ENCODE measurements at regions of chr13 and their contacts with region 1.

Region 1: GRCh38 chr13:97432917-97433726 is 847 bp upstream of the RAP2A start:
- DNase-seq: peak; percentile 99
- H3K4me3 Mint-ChIP-seq: peak overlapping the region; percentile 95
- H3K27ac Mint-ChIP-seq: peak overlapping the region; percentile 99
- H3K4me1 Mint-ChIP-seq: peaks cover 22% of the 10 kb centered on the region
- H3K27me3 Mint-ChIP-seq: peaks cover 3% of the 10 kb centered on the region

Region 2: DNA sequence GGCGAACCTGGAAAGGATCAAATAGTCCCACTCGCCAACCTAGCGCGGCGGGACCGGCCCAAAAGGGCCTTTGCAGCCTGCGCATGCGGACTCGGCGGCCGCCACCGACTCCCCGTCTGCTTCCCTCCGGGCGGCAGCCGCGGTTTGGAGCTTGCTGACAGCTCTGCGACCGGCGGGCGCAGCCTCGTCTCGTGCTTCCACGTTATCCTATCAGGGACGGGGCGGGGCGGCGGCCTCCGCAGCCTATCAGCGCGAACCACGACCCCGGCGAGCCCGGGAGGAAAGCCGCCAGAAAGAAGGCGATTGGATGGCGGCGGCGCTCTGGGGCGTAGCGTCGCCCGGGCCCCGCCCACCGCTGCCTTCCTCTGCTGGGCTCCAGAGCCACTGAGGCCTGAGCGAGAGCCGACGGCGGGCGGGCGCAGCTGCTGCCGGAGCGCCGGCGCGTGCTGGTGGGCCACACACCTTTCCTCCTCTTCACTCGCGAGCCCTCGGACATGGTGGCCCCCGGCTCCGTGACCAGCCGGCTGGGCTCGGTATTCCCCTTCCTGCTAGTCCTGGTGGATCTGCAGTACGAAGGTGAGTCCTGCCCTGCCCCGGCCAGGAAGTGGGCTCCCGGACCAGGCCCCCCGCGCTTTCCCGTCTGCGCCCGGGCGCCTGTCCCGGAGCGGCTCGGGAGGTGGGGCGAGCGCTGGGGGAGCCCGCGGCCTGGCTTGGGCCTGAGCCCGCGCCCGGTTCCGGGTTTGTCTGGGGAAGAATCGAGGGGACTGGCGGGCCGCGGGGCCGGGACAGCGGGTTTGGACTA is 1756.2 kb before region 1 on chr13 and contains the start of gene DNAJC3:
- CTCF ChIA-PET with region 1: no interaction called
- POLR2A ChIA-PET with region 1: interaction called, 3 read pairs
- intact Hi-C with region 1: loop called (anchors 2 kb)
- DNase-seq: peak; percentile 98
- H3K4me3 Mint-ChIP-seq: peak within 1 kb of the TSS; percentile 94
- H3K27ac Mint-ChIP-seq: peak within 1 kb of the TSS; percentile 82
- H3K4me1 Mint-ChIP-seq: peaks cover 56% of the 10 kb centered on the region
- H3K27me3 Mint-ChIP-seq: no peaks in the 10 kb centered on the region
- total RNA-seq, gene DNAJC3: 19.2 to 20.1 TPM

Region 3: GRCh38 chr13:97221989-97222700 is 211.0 kb before region 1 on chr13 and contains the start of gene MBNL2:
- CTCF ChIA-PET with region 1: no interaction called
- POLR2A ChIA-PET with region 1: interaction called, 11 read pairs
- intact Hi-C with region 1: loop called (anchors 1 kb)
- DNase-seq: peak; percentile 93
- H3K4me3 Mint-ChIP-seq: peak within 1 kb of the TSS; percentile 81
- H3K27ac Mint-ChIP-seq: peak within 1 kb of the TSS; percentile 91
- H3K4me1 Mint-ChIP-seq: peaks cover 31% of the 10 kb centered on the region
- H3K27me3 Mint-ChIP-seq: no peaks in the 10 kb centered on the region
- total RNA-seq, gene MBNL2: 23.4 to 24.6 TPM

Region 4: GRCh38 chr13:97369261-97369893 is 63.7 kb before region 1 on chr13:
- CTCF ChIA-PET with region 1: no interaction called
- POLR2A ChIA-PET with region 1: interaction called, 4 read pairs
- intact Hi-C with region 1: loop called (anchors 2 kb)
- DNase-seq: no peak
- H3K4me3 Mint-ChIP-seq: peak overlapping the region; percentile 63
- H3K27ac Mint-ChIP-seq: no peak overlapping the region
- H3K4me1 Mint-ChIP-seq: peaks cover 19% of the 10 kb centered on the region
- H3K27me3 Mint-ChIP-seq: no peaks in the 10 kb centered on the region

Region 5: GRCh38 chr13:97574926-97575325 is 141.8 kb after region 1 on chr13:
- CTCF ChIA-PET with region 1: interaction called, 4 read pairs
- POLR2A ChIA-PET with region 1: no interaction called
- intact Hi-C with region 1: loop called (anchors 10 kb)
- DNase-seq: peak; percentile 32
- H3K4me3 Mint-ChIP-seq: no peak overlapping the region
- H3K27ac Mint-ChIP-seq: no peak overlapping the region
- H3K4me1 Mint-ChIP-seq: no peaks in the 10 kb centered on the region
- H3K27me3 Mint-ChIP-seq: peaks cover 2% of the 10 kb centered on the region

Region 6: DNA sequence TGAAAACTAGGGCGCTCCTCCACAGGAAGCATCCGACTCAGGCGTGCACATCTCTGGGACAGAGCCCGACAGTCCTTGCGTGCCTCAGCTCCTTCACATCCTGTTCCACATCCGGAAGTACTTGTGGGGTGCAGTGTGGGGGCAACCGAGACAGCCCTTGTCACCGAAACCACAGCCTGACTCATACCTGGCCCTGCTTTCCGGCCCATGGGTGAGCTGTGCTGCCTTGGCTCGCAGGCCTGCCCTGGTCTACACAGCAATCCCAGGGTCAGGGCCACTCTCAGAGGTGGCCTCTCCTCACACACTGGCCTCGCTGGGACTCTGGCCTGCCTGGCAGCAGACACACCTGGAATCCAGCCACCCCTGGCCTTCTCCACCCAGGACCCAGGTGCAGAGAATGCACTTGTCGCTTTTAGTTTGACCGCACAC is 1043.4 kb after region 1 on chr13:
- CTCF ChIA-PET with region 1: no interaction called
- POLR2A ChIA-PET with region 1: no interaction called
- intact Hi-C with region 1: loop called (anchors 2 kb)
- DNase-seq: peak; percentile 96
- H3K4me3 Mint-ChIP-seq: peak overlapping the region; percentile 62
- H3K27ac Mint-ChIP-seq: peak overlapping the region; percentile 91
- H3K4me1 Mint-ChIP-seq: peaks cover 62% of the 10 kb centered on the region
- H3K27me3 Mint-ChIP-seq: no peaks in the 10 kb centered on the region